AG04449 (cell line): ENCODE measurements at regions of chr9 and their contacts with region 1.

Region 1: DNA sequence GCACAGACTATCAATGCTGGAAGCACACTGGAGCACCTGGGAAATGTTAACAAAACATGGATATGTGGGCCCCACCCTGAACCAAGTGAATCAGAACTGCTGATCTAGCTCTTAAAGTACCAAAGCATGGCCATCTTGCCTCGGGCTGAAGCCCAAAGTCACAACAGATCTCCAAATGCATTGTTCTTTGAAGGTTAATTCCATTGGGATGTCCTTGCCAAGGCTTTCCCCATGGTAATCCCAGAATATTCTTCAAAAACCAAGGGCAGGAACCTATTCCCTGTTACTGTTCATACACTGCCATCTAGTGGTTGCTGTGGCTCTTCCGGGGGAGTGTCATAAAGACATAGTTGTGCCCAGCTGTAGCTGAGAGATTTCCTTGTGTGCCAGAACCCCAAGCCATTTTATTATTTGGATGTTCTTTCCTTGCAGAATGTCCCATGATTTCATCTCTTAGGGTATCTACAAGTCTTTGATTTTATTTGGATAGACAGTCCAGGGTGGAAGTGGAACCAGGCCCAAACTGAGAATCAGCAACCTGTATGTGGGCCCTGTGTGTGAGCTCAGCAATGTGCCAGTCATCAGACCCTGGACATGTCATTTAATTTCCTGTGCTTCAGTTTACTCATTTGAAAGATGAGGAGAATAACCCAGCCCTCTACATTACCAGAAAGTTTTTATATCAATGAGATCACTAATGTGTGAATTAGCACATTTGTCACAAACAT is 290.0 kb downstream of the ACTL7B start:
- DNase-seq: peak; percentile 45
- H3K4me3 ChIP-seq: no peak overlapping the region
- CTCF ChIP-seq: peak; percentile 70

Region 2: GRCh38 chr9:107465467-107466451 is 1100.1 kb before region 1 on chr9:
- CTCF ChIA-PET with region 1: interaction called, 52 read pairs
- POLR2A ChIA-PET with region 1: no interaction called
- DNase-seq: no peak
- H3K4me3 ChIP-seq: peak overlapping the region; percentile 61
- CTCF ChIP-seq: peak; percentile 77

Region 3: GRCh38 chr9:108272349-108272899 is 293.4 kb before region 1 on chr9:
- CTCF ChIA-PET with region 1: interaction called, 11 read pairs
- POLR2A ChIA-PET with region 1: no interaction called
- DNase-seq: no peak
- H3K4me3 ChIP-seq: peak overlapping the region; percentile 40
- CTCF ChIP-seq: peak; percentile 37

Region 4: DNA sequence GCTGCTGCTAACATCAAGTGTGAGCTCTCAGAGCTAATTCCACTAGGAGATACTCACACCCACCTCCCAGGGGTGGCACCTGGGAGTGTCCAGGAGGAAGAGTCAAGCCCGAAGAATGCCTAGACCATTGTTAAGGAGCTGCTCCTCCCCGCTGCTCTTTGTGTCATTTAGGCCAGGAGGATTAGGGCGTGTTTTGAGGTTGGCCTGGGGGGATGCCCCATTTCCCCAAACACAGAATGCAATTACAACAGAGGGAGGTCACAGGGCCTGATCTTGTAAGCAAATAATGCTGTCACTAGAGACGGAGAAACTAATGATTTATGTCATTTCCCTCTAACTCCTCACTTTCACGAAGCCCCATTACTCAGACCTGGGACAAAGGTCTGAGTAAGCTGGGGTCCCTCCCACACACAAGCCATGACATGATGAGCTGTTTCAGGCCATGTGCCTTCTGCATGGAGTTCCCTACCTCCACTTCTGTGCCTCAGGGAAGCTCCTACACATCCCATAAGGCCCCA is 22.5 kb before region 1 on chr9:
- CTCF ChIA-PET with region 1: interaction called, 10 read pairs
- POLR2A ChIA-PET with region 1: no interaction called
- DNase-seq: no peak
- H3K4me3 ChIP-seq: no peak overlapping the region
- CTCF ChIP-seq: no peak

Region 5: DNA sequence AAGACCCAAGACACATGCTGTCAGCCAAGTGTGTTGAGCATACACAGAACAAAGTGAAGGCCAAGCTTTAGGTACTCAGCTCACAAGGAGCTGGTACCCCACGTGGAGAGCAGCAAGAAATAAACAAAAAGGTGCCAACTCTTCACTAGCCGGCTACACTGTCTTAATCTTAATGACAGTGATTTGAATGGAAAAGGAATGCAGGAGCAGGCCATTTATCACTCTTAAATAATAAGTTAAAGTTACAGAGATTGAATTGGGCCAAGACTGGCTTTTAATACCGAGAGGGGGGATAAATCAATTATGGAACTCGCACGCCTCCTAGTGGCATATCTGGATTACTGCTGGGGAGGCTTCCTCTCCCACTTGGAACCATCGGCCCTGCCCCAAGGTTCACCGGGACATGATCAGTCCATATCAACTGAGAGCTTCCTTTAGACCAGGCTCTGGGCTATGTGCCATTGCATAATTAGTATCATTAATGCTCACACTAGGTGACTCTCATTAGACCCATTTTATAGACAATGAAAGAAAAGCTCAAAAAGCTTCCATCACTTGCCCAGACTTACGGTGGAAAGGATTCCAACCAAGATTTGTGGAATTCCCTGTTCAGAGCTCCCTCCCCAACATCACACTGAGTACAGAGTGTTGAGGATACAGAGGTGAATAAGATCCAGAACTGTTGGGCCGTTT is 196.0 kb after region 1 on chr9:
- CTCF ChIA-PET with region 1: interaction called, 39 read pairs
- POLR2A ChIA-PET with region 1: no interaction called
- DNase-seq: no peak
- H3K4me3 ChIP-seq: no peak overlapping the region
- CTCF ChIP-seq: peak; percentile 80